HAP-1 (cell line): ENCODE measurements at regions of chr2 and their contacts with region 1.

Region 1: DNA sequence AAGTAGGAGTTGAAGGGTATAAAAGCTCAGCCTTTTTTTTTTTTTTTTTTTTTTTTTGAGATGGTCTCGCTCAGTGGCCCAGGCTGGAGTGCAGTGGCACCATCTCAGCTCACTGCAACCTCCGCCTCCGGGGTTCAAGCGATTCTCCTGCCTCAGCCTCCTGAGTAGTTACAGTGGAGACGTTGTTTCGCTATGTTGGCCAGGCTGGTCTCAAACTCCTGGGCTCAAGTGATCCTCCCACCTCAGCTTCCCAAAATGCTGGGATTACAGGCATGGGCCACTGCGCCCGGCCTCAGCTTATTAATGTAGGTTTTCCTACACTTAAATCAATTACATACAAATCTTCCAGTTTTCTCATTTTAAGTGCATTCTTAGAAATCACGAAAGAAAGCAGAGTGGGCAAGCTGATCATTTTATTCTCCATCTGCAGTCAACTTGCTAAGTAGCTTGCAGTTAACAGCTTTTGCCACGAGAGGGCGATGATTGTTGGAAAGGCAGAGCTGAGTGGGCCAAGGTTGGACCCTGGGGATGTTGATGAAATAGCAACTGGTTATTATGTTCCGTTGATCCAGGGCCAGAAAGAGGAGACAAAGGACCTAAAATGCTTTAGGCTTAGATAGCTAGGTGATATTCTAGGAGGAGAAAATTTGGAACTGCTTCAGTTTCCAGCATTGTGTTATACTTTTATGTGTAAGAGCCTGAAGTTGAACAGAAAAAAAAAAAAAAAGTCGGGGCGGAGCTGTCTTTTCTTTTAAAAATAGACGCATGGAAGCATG is 234.4 kb upstream of the EPAS1 start:
- DNase-seq: peak; percentile 57 to 86
- H3K4me3 ChIP-seq: no peak overlapping the region
- H3K4me1 ChIP-seq: peaks cover 2% of the 10 kb centered on the region
- H3K27me3 ChIP-seq: no peaks in the 10 kb centered on the region

Region 2: GRCh38 chr2:45909663-45910191 is 153.1 kb before region 1 on chr2:
- in situ Hi-C with region 1: no loop called
- DNase-seq: no peak
- H3K4me3 ChIP-seq: no peak overlapping the region
- H3K4me1 ChIP-seq: no peaks in the 10 kb centered on the region
- H3K27me3 ChIP-seq: no peaks in the 10 kb centered on the region

Region 3: GRCh38 chr2:46364797-46365457 is 302.1 kb after region 1 on chr2:
- in situ Hi-C with region 1: loop called (anchors 25 kb)
- DNase-seq: peak; percentile 56 to 57
- H3K4me3 ChIP-seq: no peak overlapping the region
- H3K4me1 ChIP-seq: no peaks in the 10 kb centered on the region
- H3K27me3 ChIP-seq: peaks cover 7% of the 10 kb centered on the region

Region 4: DNA sequence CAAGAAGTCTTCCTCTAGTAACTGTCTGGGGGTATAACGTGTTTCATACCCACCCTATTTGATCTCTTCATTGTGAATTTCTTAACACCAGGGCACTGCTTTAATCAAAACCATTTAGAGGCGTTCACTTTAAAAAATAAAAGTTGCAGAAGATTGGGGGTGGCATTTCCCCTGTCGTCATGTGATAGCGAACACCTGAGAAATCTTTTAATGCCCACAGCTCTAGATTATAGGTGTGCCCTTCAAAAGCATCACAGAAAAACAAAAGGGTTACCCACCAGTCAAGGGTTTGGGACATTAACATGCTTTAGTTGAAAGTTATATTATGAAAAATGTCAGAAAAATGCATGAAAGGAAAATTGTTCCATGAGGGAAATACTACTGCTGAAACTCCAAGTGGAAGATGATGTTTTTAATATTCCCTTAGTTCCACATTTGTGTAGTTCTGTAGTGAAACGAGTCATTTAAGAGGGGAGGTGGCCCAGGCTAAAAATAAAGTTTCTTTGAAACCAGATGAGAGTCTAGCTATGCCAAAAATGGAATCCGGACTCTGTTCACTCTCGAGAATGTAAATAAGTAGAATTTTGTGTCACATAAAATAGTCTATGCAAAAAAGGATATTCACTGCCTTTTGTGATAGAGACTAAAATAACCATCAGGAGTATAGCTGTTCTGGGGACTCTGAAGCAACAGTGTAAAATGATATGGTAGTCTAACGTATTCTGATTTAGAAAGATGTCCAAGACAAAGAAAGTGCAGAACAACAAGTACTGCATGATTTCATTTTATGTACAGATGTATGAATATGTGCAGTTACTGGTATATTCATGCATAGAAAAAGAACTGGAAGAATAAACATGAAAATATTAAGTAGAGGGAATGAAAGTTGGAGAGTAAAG is 511.9 kb after region 1 on chr2:
- in situ Hi-C with region 1: no loop called
- DNase-seq: peak in 1 of 2 experiments; percentile 33
- H3K4me3 ChIP-seq: no peak overlapping the region
- H3K4me1 ChIP-seq: peaks cover 23% of the 10 kb centered on the region
- H3K27me3 ChIP-seq: no peaks in the 10 kb centered on the region